Kidney (tissue), 22 donors: ENCODE measurements at regions of chr7 and their contacts with region 1.

Region 1: DNA sequence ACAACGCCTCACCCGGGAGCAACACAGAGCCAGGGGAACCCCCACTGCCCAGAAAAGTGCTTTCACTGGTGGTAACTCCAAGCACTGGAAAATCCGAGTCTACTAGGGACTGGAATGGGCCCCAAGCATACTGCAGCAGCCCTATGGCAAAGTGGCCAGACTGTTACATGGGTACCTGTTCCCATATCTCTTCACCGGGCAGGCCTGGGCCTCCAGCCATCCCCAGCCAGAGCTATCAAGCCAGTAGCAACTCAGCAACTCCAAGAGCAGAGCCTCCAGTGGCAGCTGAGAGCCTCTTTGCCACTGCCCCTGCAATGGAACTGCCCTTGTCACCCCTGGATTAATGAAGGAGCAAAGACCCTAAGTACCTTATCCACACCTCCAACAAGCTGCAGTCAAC is 73.5 kb downstream of the HBP1 start:
- DNase-seq: no peak
- H3K4me3 ChIP-seq: no peak overlapping the region
- H3K27ac ChIP-seq: no peak overlapping the region
- H3K4me1 ChIP-seq: no peaks in the 10 kb centered on the region
- H3K27me3 ChIP-seq: no peaks in the 10 kb centered on the region
- CTCF ChIP-seq: no peak

Region 2: GRCh38 chr7:107304636-107305035 is 62.4 kb after region 1 on chr7:
- intact Hi-C with region 1: loop called (anchors 10 kb)
- DNase-seq: no peak
- H3K4me3 ChIP-seq: no peak overlapping the region
- H3K27ac ChIP-seq: no peak overlapping the region
- H3K4me1 ChIP-seq: no peaks in the 10 kb centered on the region
- H3K27me3 ChIP-seq: no peaks in the 10 kb centered on the region
- CTCF ChIP-seq: no peak